ENCODE measurements at regions of chr3 and their contacts with region 1.

Region 1: DNA sequence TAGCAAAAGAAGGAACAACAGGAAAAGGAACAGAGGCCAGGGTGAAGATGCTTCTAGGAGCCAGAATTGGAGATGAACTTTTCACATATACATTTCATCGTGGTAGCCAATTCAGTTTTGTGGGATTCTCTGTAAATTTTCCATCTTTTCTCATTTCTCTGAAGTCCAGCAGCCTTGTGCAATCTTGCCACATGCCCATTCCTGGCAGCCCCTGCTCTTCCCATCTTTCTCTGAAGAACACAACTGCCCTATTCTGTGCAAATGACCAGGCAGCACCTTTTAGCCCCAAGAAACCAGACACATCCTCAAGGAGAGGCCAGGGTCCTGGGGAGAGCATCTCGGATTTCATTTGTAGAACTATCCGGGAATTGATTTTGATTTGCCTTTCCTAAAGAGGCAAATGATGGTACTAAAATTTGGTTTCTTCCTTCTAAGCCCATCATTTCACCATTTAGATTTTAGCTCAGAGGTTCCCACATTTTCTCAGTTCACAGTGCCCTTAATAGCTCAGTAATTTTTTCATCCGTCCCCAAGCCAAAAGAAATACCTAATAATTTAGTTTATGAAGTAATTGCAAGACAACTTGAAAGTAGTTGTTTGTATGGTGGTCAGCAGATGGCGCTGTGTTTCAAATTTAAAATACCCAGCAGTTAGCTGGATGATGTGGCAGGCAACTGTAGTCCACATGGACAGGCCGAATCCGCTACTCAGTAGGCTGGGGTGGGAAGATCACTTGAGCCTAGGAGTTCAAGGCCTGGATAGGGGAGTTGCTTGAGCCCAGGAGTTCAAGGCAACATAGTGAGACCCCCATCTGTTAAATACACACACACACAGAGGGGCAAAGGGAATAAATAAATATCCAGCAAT is 61.3 kb upstream of the ACKR4 start:
- DNase-seq: peak; percentile 85
- H3K4me3 ChIP-seq: no peak overlapping the region
- CTCF ChIP-seq: peak; percentile 44

Region 2: GRCh38 chr3:132641837-132642538 is 106.2 kb after region 1 on chr3:
- in situ Hi-C with region 1: loop called (anchors 25 kb)
- DNase-seq: peak; percentile 64
- H3K4me3 ChIP-seq: no peak overlapping the region
- CTCF ChIP-seq: peak; percentile 50

Region 3: GRCh38 chr3:133211449-133211848 is 675.6 kb after region 1 on chr3:
- in situ Hi-C with region 1: no loop called
- DNase-seq: no peak
- H3K4me3 ChIP-seq: no peak overlapping the region
- CTCF ChIP-seq: no peak

Measured in astrocyte of the cerebellum (primary cell).